ENCODE measurements at regions of chr6 and their contacts with region 1.

Region 1: GRCh38 chr6:5995949-5996713 is 10.6 kb downstream of the NRN1 start:
- DNase-seq: no peak
- H3K4me3 ChIP-seq: peak overlapping the region; percentile 58 to 61
- H3K27ac ChIP-seq: peak overlapping the region in 1 of 2 donors; percentile 31
- H3K4me1 ChIP-seq: peaks cover 5 to 17% of the 10 kb centered on the region in 2 donors
- H3K27me3 ChIP-seq: peaks cover 41% of the 10 kb centered on the region
- CTCF ChIP-seq: peak in 2 of 3 experiments; percentile 15 to 16

Region 2: GRCh38 chr6:5941188-5941587 is 54.9 kb before region 1 on chr6:
- intact Hi-C with region 1: loop called (anchors 5 kb)
- DNase-seq: no peak
- H3K4me3 ChIP-seq: no peak overlapping the region
- H3K27ac ChIP-seq: peak overlapping the region; percentile 26 to 35
- H3K4me1 ChIP-seq: peaks cover 0 to 14% of the 10 kb centered on the region in 2 donors
- H3K27me3 ChIP-seq: no peaks in the 10 kb centered on the region
- CTCF ChIP-seq: no peak

Measured in ascending aorta (tissue), 2 donors.